GM13976 (cell line): ENCODE measurements at regions of chrX and their contacts with region 1.

Region 1: DNA sequence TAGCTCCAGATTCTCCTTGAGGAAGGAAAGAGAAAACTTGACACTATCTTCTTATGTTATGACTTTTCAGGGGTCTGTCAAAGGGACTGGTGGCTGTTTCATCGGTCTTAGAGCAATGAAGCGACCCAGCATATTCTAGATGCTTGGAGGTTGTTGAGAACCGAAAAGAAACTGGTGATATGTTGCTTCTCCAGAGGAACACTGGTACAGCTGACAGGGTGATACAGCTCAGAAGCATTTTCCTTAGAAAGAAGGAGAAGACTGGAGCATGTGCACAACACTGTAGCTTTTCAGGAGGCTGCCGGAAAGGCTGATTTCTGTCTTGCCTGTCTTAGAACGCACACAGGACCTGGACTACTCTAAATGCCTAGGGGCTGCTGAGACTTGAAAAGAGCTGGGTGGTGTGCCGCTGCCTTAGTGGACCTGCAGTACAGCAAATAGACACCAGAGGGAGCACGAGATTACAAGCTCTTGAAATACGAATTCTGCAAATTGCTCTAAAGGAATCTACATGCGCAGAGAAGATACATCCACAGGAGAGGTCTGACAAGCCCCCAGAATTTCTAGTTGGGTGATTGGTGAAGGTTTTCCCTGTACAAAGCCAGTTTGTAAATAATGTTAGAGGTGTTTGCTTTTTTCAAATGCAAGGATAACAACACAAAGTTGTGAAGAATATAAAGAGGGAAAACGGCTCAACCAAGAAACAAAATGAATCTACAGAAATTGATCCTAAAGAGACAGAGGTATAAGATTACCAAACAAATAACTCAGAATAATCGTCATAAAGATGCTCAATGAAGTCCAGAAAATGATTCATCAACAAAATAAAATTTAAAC is 223.1 kb upstream of the DMD start:
- DNase-seq: peak; percentile 15
- CTCF ChIP-seq: peak; percentile 63

Region 2: GRCh38 chrX:33014949-33015348 is 419.5 kb before region 1 on chrX:
- in situ Hi-C with region 1: no loop called
- DNase-seq: no peak
- CTCF ChIP-seq: no peak

Region 3: GRCh38 chrX:33379839-33380238 is 54.6 kb before region 1 on chrX:
- in situ Hi-C with region 1: no loop called
- DNase-seq: no peak
- CTCF ChIP-seq: no peak

Region 4: GRCh38 chrX:33949300-33949699 is 514.8 kb after region 1 on chrX:
- in situ Hi-C with region 1: no loop called
- DNase-seq: no peak
- CTCF ChIP-seq: no peak

Region 5: DNA sequence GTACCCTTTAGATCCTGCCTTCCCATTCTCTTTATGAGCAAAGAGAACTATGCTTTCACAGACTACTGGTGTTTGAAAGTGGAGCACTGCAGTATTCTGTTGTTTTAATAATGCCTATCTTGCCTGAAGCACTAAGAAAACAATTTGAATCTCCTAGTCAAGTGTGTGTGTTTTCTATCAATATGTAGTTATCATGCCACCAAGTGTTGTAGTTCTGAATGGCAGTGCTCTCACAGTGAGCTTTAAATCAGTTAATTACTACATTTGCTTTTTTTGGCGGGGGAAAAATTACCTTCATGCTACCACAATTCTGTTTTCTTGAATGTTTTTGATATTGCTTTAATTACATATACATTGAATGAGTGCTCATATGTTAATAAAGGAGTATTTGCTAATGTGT is 841.2 kb after region 1 on chrX:
- in situ Hi-C with region 1: loop called (anchors 25 kb)
- DNase-seq: no peak
- CTCF ChIP-seq: no peak